ENCODE measurements at regions of chr9 and their contacts with region 1.

Region 1: GRCh38 chr9:89122949-89123348 is 55.7 kb downstream of the SHC3 start:
- DNase-seq: no peak
- ATAC-seq: no peak
- H3K4me3 ChIP-seq: no peak overlapping the region
- H3K4me3 Mint-ChIP-seq: no peak overlapping the region
- H3K27ac ChIP-seq: no peak overlapping the region
- H3K27ac Mint-ChIP-seq: no peak overlapping the region
- H3K4me1 ChIP-seq: no peaks in the 10 kb centered on the region
- H3K4me1 Mint-ChIP-seq: no peaks in the 10 kb centered on the region
- H3K27me3 ChIP-seq: no peaks in the 10 kb centered on the region
- H3K27me3 Mint-ChIP-seq: peaks cover 20% of the 10 kb centered on the region
- CTCF ChIP-seq: no peak

Region 2: DNA sequence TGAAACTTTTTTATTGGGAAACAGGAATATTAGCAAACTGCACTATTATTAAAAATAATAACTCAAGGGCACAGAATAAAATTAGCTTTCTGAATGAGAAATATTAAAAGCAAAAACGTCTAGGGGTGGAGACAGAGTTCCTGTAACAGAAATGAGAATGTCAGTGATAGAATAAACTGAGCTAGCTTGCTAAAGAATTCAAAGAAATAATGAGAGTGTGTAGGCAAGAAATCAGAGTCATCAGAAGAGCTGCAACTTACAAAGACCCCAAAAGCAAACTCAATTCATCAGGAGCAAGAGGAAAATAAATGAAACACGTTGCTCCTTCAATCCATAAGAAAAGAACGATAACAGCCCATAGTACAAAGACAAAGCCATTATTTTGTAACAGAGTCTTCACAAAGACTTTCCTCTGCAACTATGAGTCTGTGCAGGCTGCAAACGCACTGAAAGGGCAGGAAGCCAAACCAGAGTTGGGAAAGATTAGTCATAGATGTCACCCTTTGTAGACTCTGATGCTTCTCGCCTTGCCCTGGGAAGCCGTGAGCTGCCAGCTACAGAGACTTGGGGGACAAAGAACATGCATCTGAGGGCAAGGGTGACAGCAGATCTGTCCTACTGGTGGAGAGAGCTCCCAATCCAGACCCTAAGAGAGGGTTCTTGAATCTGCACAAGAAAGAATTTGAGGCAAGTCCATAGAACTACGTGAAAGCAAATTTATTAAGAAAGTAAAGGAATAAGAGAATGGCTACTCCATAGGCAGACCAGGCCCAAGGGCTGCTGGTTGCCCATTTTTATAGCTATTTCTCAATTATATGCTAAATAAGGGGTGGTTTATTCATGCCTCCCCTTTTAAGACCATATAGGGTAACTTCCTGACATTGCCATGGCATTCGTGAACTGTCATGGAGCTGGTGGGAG is 14.9 kb after region 1 on chr9:
- CTCF ChIA-PET with region 1: no interaction called
- POLR2A ChIA-PET with region 1: interaction called, 11 read pairs
- intact Hi-C with region 1: no loop called
- DNase-seq: no peak
- ATAC-seq: no peak
- H3K4me3 ChIP-seq: no peak overlapping the region
- H3K4me3 Mint-ChIP-seq: no peak overlapping the region
- H3K27ac ChIP-seq: no peak overlapping the region
- H3K27ac Mint-ChIP-seq: no peak overlapping the region
- H3K4me1 ChIP-seq: no peaks in the 10 kb centered on the region
- H3K4me1 Mint-ChIP-seq: no peaks in the 10 kb centered on the region
- H3K27me3 ChIP-seq: no peaks in the 10 kb centered on the region
- H3K27me3 Mint-ChIP-seq: peaks cover 7% of the 10 kb centered on the region
- CTCF ChIP-seq: no peak